ENCODE measurements at regions of chr17 and their contacts with region 1.

Region 1: GRCh38 chr17:74748529-74749365 is at the start of gene NHERF1:
- DNase-seq: peak; percentile 61 to 96 (median 94)
- H3K4me3 ChIP-seq: peak within 1 kb of the TSS; percentile 64 to 92
- H3K4me3 Mint-ChIP-seq: peak within 1 kb of the TSS; percentile 90 to 99 (median 98)
- H3K27ac ChIP-seq: peak within 1 kb of the TSS; percentile 80
- H3K27ac Mint-ChIP-seq: peak within 1 kb of the TSS; percentile 88 to 98 (median 94)
- H3K4me1 ChIP-seq: peaks cover 73% of the 10 kb centered on the region
- H3K4me1 Mint-ChIP-seq: peaks cover 43 to 81% (median 60%) of the 10 kb centered on the region in 4 donors
- H3K27me3 ChIP-seq: no peaks in the 10 kb centered on the region
- H3K27me3 Mint-ChIP-seq: no peaks in the 10 kb centered on the region
- total RNA-seq, gene NHERF1: 202 to 209 TPM

Region 2: GRCh38 chr17:74759243-74759801 is 10.6 kb after region 1 on chr17:
- CTCF ChIA-PET with region 1: interaction called, 128 read pairs
- POLR2A ChIA-PET with region 1: interaction called, 217 read pairs
- intact Hi-C with region 1: loop called (anchors 1 kb)
- DNase-seq: peak; percentile 63 to 75 (median 64)
- H3K4me3 ChIP-seq: peak overlapping the region; percentile 34 to 54
- H3K4me3 Mint-ChIP-seq: peak overlapping the region; percentile 74 to 90 (median 84)
- H3K27ac ChIP-seq: peak overlapping the region; percentile 65
- H3K27ac Mint-ChIP-seq: peak overlapping the region; percentile 84 to 93 (median 90)
- H3K4me1 ChIP-seq: peaks cover 94% of the 10 kb centered on the region
- H3K4me1 Mint-ChIP-seq: peaks cover 42 to 84% (median 65%) of the 10 kb centered on the region in 4 donors
- H3K27me3 ChIP-seq: no peaks in the 10 kb centered on the region
- H3K27me3 Mint-ChIP-seq: no peaks in the 10 kb centered on the region

Region 3: GRCh38 chr17:74770498-74771318 is 22.0 kb after region 1 on chr17:
- CTCF ChIA-PET with region 1: interaction called, 144 read pairs
- POLR2A ChIA-PET with region 1: interaction called, 489 read pairs
- intact Hi-C with region 1: loop called (anchors 1 kb)
- DNase-seq: peak; percentile 79
- H3K4me3 ChIP-seq: no peak overlapping the region
- H3K4me3 Mint-ChIP-seq: peak overlapping the region in 3 of 8 donors; percentile 20 to 46 (median 24)
- H3K27ac ChIP-seq: peak overlapping the region; percentile 46
- H3K27ac Mint-ChIP-seq: peak overlapping the region; percentile 64 to 92 (median 89)
- H3K4me1 ChIP-seq: peaks cover 31% of the 10 kb centered on the region
- H3K4me1 Mint-ChIP-seq: peaks cover 21 to 67% (median 39%) of the 10 kb centered on the region in 4 donors
- H3K27me3 ChIP-seq: no peaks in the 10 kb centered on the region
- H3K27me3 Mint-ChIP-seq: no peaks in the 10 kb centered on the region

Region 4: GRCh38 chr17:74776044-74776977 is 27.6 kb after region 1 on chr17 and contains the start of gene NAT9:
- CTCF ChIA-PET with region 1: interaction called, 144 read pairs
- POLR2A ChIA-PET with region 1: interaction called, 489 read pairs
- intact Hi-C with region 1: loop called (anchors 1 kb)
- DNase-seq: peak; percentile 95 to 99 (median 97)
- H3K4me3 ChIP-seq: peak within 1 kb of the TSS; percentile 64 to 89
- H3K4me3 Mint-ChIP-seq: peak within 1 kb of the TSS; percentile 95 to 100 (median 99)
- H3K27ac ChIP-seq: peak within 1 kb of the TSS; percentile 77
- H3K27ac Mint-ChIP-seq: peak within 1 kb of the TSS; percentile 93 to 99 (median 97)
- H3K4me1 ChIP-seq: peaks cover 65% of the 10 kb centered on the region
- H3K4me1 Mint-ChIP-seq: peaks cover 45 to 83% (median 61%) of the 10 kb centered on the region in 4 donors
- H3K27me3 ChIP-seq: no peaks in the 10 kb centered on the region
- H3K27me3 Mint-ChIP-seq: no peaks in the 10 kb centered on the region
- total RNA-seq, gene NAT9: 60.0 to 70.3 TPM

Region 5: GRCh38 chr17:74864866-74865395 is 116.2 kb after region 1 on chr17:
- CTCF ChIA-PET with region 1: interaction called, 77 read pairs
- POLR2A ChIA-PET with region 1: interaction called, 10 read pairs
- intact Hi-C with region 1: loop called (anchors 1 kb)
- DNase-seq: peak; percentile 52 to 68 (median 62)
- H3K4me3 ChIP-seq: no peak overlapping the region
- H3K4me3 Mint-ChIP-seq: peak overlapping the region in 1 of 8 donors; percentile 65
- H3K27ac ChIP-seq: no peak overlapping the region
- H3K27ac Mint-ChIP-seq: peak overlapping the region in 2 of 7 donors; percentile 6 to 68
- H3K4me1 ChIP-seq: peaks cover 23% of the 10 kb centered on the region
- H3K4me1 Mint-ChIP-seq: peaks cover 12 to 20% (median 15%) of the 10 kb centered on the region in 4 donors
- H3K27me3 ChIP-seq: peaks cover 11% of the 10 kb centered on the region
- H3K27me3 Mint-ChIP-seq: peaks cover 1 to 7% of the 10 kb centered on the region in 2 donors

Measured in CD4-positive, alpha-beta memory T cell (primary cell).